ENCODE measurements at regions of chr2 and their contacts with region 1.

Region 1: GRCh38 chr2:162297925-162298552 is 20.4 kb downstream of the IFIH1 start:
- DNase-seq: peak; percentile 74
- H3K4me3 ChIP-seq: no peak overlapping the region
- CTCF ChIP-seq: peak; percentile 65

Region 2: DNA sequence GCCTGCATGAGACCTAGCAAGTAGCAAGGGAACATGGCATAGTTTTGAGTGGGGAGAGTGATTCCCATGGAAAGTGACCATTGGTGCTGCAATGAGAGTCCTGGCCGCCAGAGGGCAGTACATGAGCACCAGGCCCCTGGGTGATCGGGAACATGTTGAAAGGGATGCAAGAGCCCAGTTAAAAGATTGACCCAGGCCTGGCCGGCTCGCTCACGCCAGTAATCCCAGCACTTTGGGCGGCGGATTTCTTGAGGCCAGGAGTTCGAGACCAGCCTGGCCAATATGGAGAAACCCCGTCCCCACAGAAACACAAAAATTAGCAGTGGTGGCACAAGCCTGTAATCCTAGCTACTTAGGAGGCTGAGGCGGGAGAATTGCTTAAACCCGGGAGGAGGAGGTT is 77.0 kb before region 1 on chr2:
- in situ Hi-C with region 1: loop called (anchors 5 kb)
- DNase-seq: peak; percentile 16
- H3K4me3 ChIP-seq: no peak overlapping the region
- CTCF ChIP-seq: peak; percentile 94